WTC11 (cell line): ENCODE measurements at regions of chr9 and their contacts with region 1.

Region 1: DNA sequence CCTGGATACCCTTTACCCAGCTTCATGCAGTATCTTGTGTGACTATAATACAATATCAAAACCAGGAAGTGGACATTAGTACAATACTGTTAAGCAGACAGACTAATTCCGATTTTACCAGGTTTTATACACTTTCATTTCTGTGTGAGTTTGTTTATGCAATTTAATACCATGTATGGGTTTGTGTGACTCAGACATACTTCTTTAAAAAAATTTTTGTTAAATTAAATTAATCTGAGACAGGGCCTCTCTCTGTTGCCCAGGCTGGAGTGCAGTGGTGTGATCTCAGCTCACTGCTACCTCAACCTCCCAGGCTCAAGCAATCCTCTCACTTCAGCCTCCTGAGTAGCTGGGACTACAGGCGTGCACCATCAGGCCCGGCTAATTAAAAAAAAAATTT is 156.8 kb downstream of the GAPVD1 start:
- DNase-seq: no peak
- ATAC-seq: no peak
- H3K4me3 Mint-ChIP-seq: no peak overlapping the region
- H3K27ac Mint-ChIP-seq: no peak overlapping the region
- H3K4me1 Mint-ChIP-seq: no peaks in the 10 kb centered on the region
- H3K27me3 Mint-ChIP-seq: no peaks in the 10 kb centered on the region
- CTCF ChIP-seq: no peak

Region 2: DNA sequence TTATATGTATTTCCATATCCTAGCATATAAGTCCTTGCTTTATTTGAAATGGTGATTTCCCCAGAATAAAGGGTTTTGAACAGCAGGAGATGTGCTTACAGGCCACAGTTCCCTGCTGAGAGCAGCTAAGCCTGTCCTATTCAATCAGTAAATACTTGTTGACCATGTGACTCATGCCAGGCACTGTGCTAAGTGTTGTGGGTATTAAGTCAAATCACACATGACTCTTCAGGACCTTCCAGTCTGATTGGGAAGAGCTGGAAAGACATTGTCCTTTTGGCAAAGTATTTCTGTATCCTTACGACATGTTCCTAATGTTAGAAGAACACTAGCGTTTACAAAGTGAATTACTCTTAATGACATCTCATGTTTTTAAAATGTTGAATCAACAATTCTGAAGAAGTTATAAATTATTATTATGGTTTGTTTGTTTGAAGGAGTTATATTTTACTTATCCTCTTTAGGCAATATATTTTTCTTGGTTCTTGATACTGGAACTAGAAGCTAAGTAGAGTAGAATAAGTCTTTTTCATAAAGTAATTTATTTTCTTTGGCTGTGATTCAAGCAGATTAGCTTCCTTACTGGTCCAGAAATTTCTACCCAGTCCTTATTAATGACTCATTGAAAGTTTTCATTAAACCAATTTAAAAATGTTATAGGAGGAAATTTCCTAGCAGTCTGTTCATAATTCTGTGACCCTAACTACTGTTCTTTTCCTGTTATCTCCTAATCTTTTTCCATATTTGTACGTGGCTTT is 74.7 kb before region 1 on chr9:
- CTCF ChIA-PET with region 1: no interaction called
- POLR2A ChIA-PET with region 1: no interaction called
- DNase-seq: peak; percentile 25
- ATAC-seq: peak; percentile 97
- H3K4me3 Mint-ChIP-seq: no peak overlapping the region
- H3K27ac Mint-ChIP-seq: no peak overlapping the region
- H3K4me1 Mint-ChIP-seq: peaks cover 18% of the 10 kb centered on the region
- H3K27me3 Mint-ChIP-seq: no peaks in the 10 kb centered on the region
- CTCF ChIP-seq: no peak

Region 3: GRCh38 chr9:125393426-125393825 is 25.0 kb before region 1 on chr9:
- CTCF ChIA-PET with region 1: no interaction called
- POLR2A ChIA-PET with region 1: no interaction called
- DNase-seq: no peak
- ATAC-seq: no peak
- H3K4me3 Mint-ChIP-seq: no peak overlapping the region
- H3K27ac Mint-ChIP-seq: no peak overlapping the region
- H3K4me1 Mint-ChIP-seq: peaks cover 8% of the 10 kb centered on the region; the same call in 1 of the 2 replicates
- H3K27me3 Mint-ChIP-seq: peaks cover 59% of the 10 kb centered on the region
- CTCF ChIP-seq: no peak

Region 4: GRCh38 chr9:125407974-125408900 is 10.2 kb before region 1 on chr9:
- CTCF ChIA-PET with region 1: interaction called, 15 read pairs
- POLR2A ChIA-PET with region 1: no interaction called
- DNase-seq: peak; percentile 82
- ATAC-seq: peak; percentile 69
- H3K4me3 Mint-ChIP-seq: peak overlapping the region; percentile 76
- H3K27ac Mint-ChIP-seq: no peak overlapping the region
- H3K4me1 Mint-ChIP-seq: peaks cover 12% of the 10 kb centered on the region
- H3K27me3 Mint-ChIP-seq: peaks cover 31% of the 10 kb centered on the region
- CTCF ChIP-seq: peak; percentile 58